ENCODE measurements at regions of chr17 and their contacts with region 1.

Region 1: DNA sequence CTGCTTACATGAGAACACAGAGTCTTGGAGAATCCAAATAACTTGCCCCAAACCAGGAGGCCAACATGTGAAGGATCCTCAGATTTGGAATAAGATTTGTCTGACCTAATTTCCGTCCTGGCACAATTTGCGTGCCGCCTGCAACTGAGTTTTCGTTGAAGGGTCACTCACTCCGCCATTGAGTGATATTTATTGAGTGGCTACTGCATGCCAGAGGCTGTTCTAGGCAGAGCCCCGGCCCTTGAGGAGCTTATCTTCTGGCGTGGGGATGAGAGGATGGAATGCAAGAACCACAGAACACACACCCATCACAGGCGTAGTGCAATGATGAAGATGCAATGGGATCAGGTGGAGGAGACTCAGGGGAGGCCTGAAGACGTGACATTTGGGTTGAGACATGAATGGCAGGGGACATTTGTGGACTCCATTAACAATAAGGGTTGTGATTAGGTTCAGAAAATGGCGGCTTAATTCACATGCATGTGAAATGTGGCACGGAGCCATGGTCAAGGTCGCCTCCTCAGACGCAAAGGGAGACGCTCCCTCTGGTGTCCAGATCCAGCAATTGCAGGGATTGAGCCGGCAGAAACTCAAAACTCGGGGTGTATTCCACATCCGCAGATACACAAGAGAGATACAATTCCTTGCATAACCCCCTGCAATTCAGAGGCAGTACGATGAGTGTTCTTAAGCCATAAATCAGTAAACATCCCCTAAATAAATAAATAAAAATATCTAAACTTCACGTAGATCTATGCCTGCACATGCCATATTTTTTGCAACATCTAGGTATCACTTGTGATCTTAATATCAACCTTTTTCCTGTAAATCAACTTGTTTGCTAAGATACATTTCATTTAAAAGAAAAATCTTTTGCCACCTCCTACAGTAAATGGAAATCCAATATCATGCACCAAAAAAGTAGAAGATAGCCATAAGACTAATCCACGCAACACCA is 57.9 kb upstream of the CACNG4 start:
- DNase-seq: peak; percentile 93
- H3K4me3 ChIP-seq: no peak overlapping the region
- H3K27ac ChIP-seq: no peak overlapping the region
- H3K4me1 ChIP-seq: peaks cover 13% of the 10 kb centered on the region
- H3K27me3 ChIP-seq: no peaks in the 10 kb centered on the region
- CTCF ChIP-seq: peak; percentile 84 to 90 (median 89)
- POLR2A ChIP-seq: no peak

Region 2: DNA sequence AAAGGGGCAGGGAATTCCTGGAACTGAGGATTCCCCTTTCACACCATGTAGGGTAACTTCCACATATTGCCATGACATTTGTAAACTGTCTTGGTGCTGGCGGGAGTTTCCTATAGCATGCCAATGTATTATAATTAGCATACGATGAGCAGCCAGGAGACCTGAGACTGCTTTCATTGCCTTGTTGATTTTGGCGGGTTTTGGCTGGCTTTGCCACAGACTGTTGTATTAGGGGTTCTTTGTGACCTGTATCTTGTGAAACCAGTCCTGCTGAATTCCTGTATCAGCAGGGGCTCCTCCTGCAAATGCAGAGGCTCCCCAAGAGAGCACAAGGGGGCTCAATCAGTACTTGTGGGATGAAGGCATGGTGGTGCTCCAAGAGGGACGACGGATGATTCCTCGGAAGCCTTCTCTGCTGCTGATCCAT is 176.1 kb before region 1 on chr17:
- intact Hi-C with region 1: loop called (anchors 5 kb)
- DNase-seq: no peak
- H3K4me3 ChIP-seq: no peak overlapping the region
- H3K27ac ChIP-seq: no peak overlapping the region
- H3K4me1 ChIP-seq: no peaks in the 10 kb centered on the region
- H3K27me3 ChIP-seq: no peaks in the 10 kb centered on the region
- CTCF ChIP-seq: no peak
- POLR2A ChIP-seq: no peak

Region 3: GRCh38 chr17:66841328-66841727 is 65.3 kb before region 1 on chr17:
- intact Hi-C with region 1: no loop called
- DNase-seq: no peak
- H3K4me3 ChIP-seq: no peak overlapping the region
- H3K27ac ChIP-seq: no peak overlapping the region
- H3K4me1 ChIP-seq: no peaks in the 10 kb centered on the region
- H3K27me3 ChIP-seq: no peaks in the 10 kb centered on the region
- CTCF ChIP-seq: no peak
- POLR2A ChIP-seq: no peak